PC-9 (cell line): ENCODE measurements at regions of chr14 and their contacts with region 1.

Region 1: GRCh38 chr14:80213599-80213998 is 2.3 kb upstream of the DIO2 start:
- DNase-seq: peak in 1 of 2 experiments; percentile 26
- H3K4me3 ChIP-seq: no peak overlapping the region
- H3K27ac ChIP-seq: no peak overlapping the region
- H3K4me1 ChIP-seq: no peaks in the 10 kb centered on the region
- H3K27me3 ChIP-seq: no peaks in the 10 kb centered on the region
- CTCF ChIP-seq: peak; percentile 52

Region 2: DNA sequence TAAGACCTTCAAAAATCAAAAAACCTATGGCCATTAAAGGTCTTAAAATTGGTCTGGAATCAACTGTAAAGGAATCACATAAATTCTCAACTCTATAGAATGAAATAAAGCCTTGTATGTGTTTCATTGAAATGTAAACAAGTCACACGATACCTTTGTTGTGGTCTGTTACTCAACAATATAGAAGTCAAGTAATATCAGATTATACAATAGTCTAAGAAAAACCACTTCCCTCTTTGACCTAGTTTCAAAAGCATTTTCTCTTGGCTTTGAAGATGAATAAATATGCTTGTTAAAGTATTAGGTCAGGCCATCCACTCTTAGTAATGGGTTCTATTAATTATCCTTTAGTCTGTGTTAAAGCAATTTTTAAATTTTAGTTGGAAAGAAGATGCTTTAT is 77.5 kb after region 1 on chr14:
- CTCF ChIA-PET with region 1: no interaction called
- POLR2A ChIA-PET with region 1: no interaction called
- intact Hi-C with region 1: no loop called
- DNase-seq: no peak
- H3K4me3 ChIP-seq: no peak overlapping the region
- H3K27ac ChIP-seq: no peak overlapping the region
- H3K4me1 ChIP-seq: 0 out of 2 replicates have a peak, but pooled peaks cover 4% of the 10 kb centered on the region
- H3K27me3 ChIP-seq: no peaks in the 10 kb centered on the region
- CTCF ChIP-seq: no peak

Region 3: DNA sequence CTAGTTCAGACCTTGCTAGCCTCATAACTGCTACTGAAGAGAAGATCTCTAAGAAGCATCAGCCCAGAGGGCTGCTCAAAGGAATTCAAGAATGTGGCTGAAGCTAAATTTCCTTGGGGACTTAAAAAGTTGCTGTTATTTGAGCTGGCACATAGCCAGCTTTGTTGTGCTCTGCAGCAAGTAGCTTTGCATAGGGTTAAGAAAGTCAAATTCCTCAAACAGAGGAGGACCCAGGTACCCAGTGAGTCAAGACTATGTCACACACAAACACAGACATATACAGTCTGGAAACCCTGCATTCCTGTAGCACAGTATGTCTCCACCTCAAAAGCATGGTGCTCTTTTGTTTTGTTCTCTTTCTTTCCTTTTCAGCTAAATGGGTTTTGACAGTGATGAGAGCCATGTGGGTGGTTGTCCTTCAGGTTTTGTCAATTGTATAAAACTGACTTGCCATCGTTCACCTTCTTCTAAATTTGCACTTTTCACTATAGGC is 177.3 kb after region 1 on chr14:
- CTCF ChIA-PET with region 1: interaction called, 11 read pairs
- POLR2A ChIA-PET with region 1: interaction called, 9 read pairs
- intact Hi-C with region 1: loop called (anchors 2 kb)
- DNase-seq: peak; percentile 59 to 87
- H3K4me3 ChIP-seq: no peak overlapping the region
- H3K27ac ChIP-seq: peak overlapping the region; percentile 49
- H3K4me1 ChIP-seq: peaks cover 40% of the 10 kb centered on the region
- H3K27me3 ChIP-seq: no peaks in the 10 kb centered on the region
- CTCF ChIP-seq: no peak

Region 4: GRCh38 chr14:80567996-80568431 is 354.4 kb after region 1 on chr14:
- CTCF ChIA-PET with region 1: no interaction called
- POLR2A ChIA-PET with region 1: interaction called, 4 read pairs
- intact Hi-C with region 1: loop called (anchors 5 kb)
- DNase-seq: peak; percentile 38 to 86
- H3K4me3 ChIP-seq: no peak overlapping the region
- H3K27ac ChIP-seq: peak overlapping the region; percentile 62
- H3K4me1 ChIP-seq: peaks cover 30% of the 10 kb centered on the region
- H3K27me3 ChIP-seq: no peaks in the 10 kb centered on the region
- CTCF ChIP-seq: no peak

Region 5: GRCh38 chr14:80636071-80636470 is 422.5 kb after region 1 on chr14:
- CTCF ChIA-PET with region 1: interaction called, 3 read pairs
- POLR2A ChIA-PET with region 1: no interaction called
- intact Hi-C with region 1: loop called (anchors 1 kb)
- DNase-seq: no peak
- H3K4me3 ChIP-seq: no peak overlapping the region
- H3K27ac ChIP-seq: peak overlapping the region; percentile 99
- H3K4me1 ChIP-seq: peaks cover 45% of the 10 kb centered on the region
- H3K27me3 ChIP-seq: no peaks in the 10 kb centered on the region
- CTCF ChIP-seq: 0 out of 2 replicates have a peak, but pooled peaks have one; percentile 21

Region 6: DNA sequence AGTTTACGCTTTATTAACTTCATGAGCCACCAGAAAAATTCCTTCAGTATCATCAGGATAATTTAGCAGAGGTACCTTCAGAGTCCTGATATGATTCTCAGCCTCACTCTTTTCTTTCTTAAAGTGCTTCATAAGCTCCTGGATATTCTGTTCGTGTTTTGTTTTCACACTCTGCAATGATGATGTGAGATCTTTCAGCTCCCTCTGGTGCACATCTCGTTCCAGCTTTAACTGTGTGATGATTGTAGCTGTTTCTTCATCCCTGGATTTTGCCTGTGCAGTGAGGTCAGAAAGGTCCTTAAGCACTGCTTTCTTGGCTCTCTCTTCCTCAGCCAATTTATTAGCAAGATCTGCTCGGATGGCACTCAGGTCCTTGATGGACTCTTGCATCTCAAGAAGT is 571.2 kb after region 1 on chr14:
- CTCF ChIA-PET with region 1: interaction called, 3 read pairs
- POLR2A ChIA-PET with region 1: no interaction called
- intact Hi-C with region 1: loop called (anchors 10 kb)
- DNase-seq: no peak
- H3K4me3 ChIP-seq: no peak overlapping the region
- H3K27ac ChIP-seq: no peak overlapping the region
- H3K4me1 ChIP-seq: no peaks in the 10 kb centered on the region
- H3K27me3 ChIP-seq: no peaks in the 10 kb centered on the region
- CTCF ChIP-seq: 0 out of 2 replicates have a peak, but pooled peaks have one; percentile 22